Cardiac septum (tissue), 1 donor: ENCODE measurements at regions of chr6 and their contacts with region 1.

Region 1: GRCh38 chr6:122129313-122130025 is 270.0 kb upstream of the HSF2 start:
- DNase-seq: no peak

Region 2: GRCh38 chr6:122008101-122008999 is 121.1 kb before region 1 on chr6:
- intact Hi-C with region 1: loop called (anchors 1 kb)
- DNase-seq: no peak

Region 3: DNA sequence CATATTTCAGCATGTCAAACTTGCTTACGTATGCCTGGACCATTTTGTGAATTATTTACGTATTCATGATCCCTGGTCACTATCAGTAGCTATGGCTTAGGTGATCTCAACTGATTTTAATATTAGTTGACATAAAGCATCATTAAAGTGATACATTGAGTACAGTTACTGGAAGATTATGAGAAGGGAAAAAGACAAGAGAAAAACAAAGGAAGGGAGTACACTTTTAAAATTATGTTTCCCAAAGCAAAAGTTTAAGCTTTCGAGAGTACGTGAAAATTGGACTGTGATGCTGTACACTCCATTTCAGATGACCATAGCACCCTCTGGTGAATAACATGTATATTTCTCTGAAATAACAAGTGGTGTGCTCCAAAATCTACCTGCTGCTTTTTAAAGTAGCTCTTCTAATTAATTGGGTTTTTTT is 54.9 kb after region 1 on chr6:
- intact Hi-C with region 1: loop called (anchors 5 kb)
- DNase-seq: no peak